ENCODE measurements at regions of chr18 and their contacts with region 1.

Region 1: GRCh38 chr18:46660955-46661749 is 4.1 kb upstream of the LOXHD1 start:
- DNase-seq: no peak
- H3K4me3 Mint-ChIP-seq: no peak overlapping the region
- H3K27ac Mint-ChIP-seq: no peak overlapping the region
- H3K4me1 Mint-ChIP-seq: peaks cover 10% of the 10 kb centered on the region
- H3K27me3 Mint-ChIP-seq: peaks cover 2% of the 10 kb centered on the region
- CTCF ChIP-seq: no peak

Region 2: DNA sequence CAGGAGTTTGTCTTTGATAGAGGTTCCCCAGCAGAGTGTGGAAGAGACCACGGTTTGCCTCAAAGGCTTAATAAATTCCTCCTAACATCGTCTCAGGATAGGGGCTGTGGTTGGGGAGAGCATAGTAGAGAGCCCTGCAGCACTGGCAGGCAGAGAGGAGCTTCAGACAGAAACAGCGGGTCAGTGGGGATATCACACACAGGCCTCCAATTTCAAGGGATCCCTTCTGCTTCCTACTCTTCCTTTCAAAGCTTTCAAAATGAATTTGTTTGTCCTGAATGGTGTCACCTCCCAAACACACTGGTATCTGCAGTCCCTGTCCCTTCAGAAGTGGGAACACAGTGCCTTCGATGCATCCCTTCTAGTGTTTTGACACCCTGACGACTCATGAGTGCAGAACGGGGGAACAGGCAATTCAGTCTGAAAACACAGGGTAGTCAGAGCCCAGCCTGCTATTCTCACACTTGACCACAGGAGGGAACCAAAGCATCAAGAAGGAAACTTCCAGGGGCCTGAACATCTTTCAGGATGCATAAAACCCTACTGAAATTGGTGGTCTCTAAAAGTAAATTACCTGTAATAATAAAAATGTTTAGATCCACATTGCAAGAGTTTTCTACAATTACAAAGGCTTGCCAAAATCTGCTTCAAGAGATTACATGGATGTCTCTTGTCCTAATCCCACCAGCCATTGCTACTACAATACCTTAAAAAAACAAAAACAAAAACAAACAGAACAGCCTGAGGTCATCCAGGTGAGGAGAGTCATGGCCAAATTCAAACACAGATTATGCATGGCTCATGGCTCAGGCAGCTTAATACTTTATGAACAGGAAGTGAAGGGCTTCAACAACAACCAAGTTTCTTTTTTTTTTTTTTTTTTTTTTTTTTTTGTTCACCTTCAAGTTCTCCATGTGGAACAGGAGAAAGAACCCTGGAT is 996.1 kb before region 1 on chr18:
- CTCF ChIA-PET with region 1: no interaction called
- POLR2A ChIA-PET with region 1: no interaction called
- intact Hi-C with region 1: loop called (anchors 2 kb)
- DNase-seq: peak; percentile 74
- H3K4me3 Mint-ChIP-seq: no peak overlapping the region
- H3K27ac Mint-ChIP-seq: no peak overlapping the region
- H3K4me1 Mint-ChIP-seq: peaks cover 11% of the 10 kb centered on the region
- H3K27me3 Mint-ChIP-seq: no peaks in the 10 kb centered on the region
- CTCF ChIP-seq: peak; percentile 93

Region 3: GRCh38 chr18:46148810-46149209 is 512.3 kb before region 1 on chr18:
- CTCF ChIA-PET with region 1: interaction called, 74 read pairs
- POLR2A ChIA-PET with region 1: interaction called, 3 read pairs
- intact Hi-C with region 1: loop called (anchors 1 kb)
- DNase-seq: peak; percentile 69
- H3K4me3 Mint-ChIP-seq: no peak overlapping the region
- H3K27ac Mint-ChIP-seq: peak overlapping the region; percentile 3
- H3K4me1 Mint-ChIP-seq: peaks cover 18% of the 10 kb centered on the region
- H3K27me3 Mint-ChIP-seq: no peaks in the 10 kb centered on the region
- CTCF ChIP-seq: peak; percentile 49

Region 4: DNA sequence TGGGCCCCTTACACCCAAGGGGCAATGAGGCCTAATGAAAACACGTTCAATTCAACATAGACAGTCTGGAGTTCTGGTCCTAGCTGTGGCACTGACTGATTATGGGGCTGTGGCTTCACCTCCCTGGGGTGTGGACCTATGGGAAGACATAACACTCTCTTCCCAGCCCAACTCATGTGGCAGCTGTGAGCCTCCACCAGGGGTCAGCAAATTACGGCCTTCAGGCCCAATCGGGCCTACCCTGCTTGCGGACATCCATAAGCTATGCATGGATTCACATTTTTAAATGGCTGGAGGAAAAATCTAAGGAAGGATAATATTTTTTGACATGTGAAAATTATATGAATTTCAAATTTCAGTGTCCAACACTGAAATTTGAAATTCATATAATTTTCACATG is 105.4 kb before region 1 on chr18:
- CTCF ChIA-PET with region 1: interaction called, 4 read pairs
- POLR2A ChIA-PET with region 1: no interaction called
- intact Hi-C with region 1: loop called (anchors 1 kb)
- DNase-seq: peak; percentile 65
- H3K4me3 Mint-ChIP-seq: no peak overlapping the region
- H3K27ac Mint-ChIP-seq: no peak overlapping the region
- H3K4me1 Mint-ChIP-seq: no peaks in the 10 kb centered on the region
- H3K27me3 Mint-ChIP-seq: peaks cover 7% of the 10 kb centered on the region
- CTCF ChIP-seq: peak; percentile 54

Region 5: GRCh38 chr18:46622999-46623398 is 38.2 kb before region 1 on chr18:
- CTCF ChIA-PET with region 1: interaction called, 41 read pairs
- POLR2A ChIA-PET with region 1: no interaction called
- intact Hi-C with region 1: no loop called
- DNase-seq: peak; percentile 19
- H3K4me3 Mint-ChIP-seq: no peak overlapping the region
- H3K27ac Mint-ChIP-seq: no peak overlapping the region
- H3K4me1 Mint-ChIP-seq: no peaks in the 10 kb centered on the region
- H3K27me3 Mint-ChIP-seq: peaks cover 16% of the 10 kb centered on the region
- CTCF ChIP-seq: peak; percentile 35

Region 6: GRCh38 chr18:46641917-46642316 is 19.2 kb before region 1 on chr18:
- CTCF ChIA-PET with region 1: interaction called, 58 read pairs
- POLR2A ChIA-PET with region 1: no interaction called
- intact Hi-C with region 1: no loop called
- DNase-seq: peak; percentile 60
- H3K4me3 Mint-ChIP-seq: no peak overlapping the region
- H3K27ac Mint-ChIP-seq: no peak overlapping the region
- H3K4me1 Mint-ChIP-seq: no peaks in the 10 kb centered on the region
- H3K27me3 Mint-ChIP-seq: peaks cover 31% of the 10 kb centered on the region
- CTCF ChIP-seq: no peak

Measured in MCF 10A (cell line).